ENCODE measurements at regions of chr10 and their contacts with region 1.

Region 1: DNA sequence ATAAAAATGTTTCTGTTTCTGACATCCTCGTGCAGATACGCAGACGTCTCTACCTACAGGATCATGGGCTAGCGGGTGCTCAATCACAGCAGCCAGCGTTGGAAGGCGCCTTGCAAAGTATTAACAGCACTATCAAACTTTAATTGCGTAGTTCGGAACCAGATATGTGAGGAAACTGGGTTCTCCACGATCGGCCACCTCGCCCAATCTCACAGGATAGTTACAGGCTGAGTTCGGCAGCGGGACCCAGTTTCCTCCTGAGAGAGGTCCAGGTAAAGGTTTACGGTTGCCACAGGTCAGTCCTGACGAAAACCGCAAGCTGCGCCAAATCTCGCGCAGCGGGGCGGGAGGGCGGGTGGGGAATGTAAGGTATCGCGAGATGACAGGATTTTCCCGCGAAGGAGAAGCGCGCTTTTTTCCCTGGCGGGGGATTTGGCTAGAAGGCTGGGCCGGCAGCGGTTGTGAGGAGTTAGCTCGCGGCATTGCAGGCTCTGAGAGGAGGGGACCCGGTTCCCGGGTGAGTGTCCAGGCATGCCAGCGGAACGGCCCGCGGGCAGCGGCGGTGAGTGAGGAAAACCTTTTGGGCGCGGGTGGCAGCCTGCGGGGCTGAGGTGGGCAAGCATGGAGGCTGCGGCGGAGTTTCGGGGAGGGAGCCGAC is at the start of gene HELLS:
- DNase-seq: peak; percentile 85
- H3K4me3 Mint-ChIP-seq: peak within 1 kb of the TSS; percentile 98
- H3K27ac Mint-ChIP-seq: peak within 1 kb of the TSS; percentile 89
- H3K4me1 Mint-ChIP-seq: peaks cover 13% of the 10 kb centered on the region
- H3K27me3 Mint-ChIP-seq: peaks cover 2% of the 10 kb centered on the region
- total RNA-seq, gene HELLS: 109 TPM

Region 2: DNA sequence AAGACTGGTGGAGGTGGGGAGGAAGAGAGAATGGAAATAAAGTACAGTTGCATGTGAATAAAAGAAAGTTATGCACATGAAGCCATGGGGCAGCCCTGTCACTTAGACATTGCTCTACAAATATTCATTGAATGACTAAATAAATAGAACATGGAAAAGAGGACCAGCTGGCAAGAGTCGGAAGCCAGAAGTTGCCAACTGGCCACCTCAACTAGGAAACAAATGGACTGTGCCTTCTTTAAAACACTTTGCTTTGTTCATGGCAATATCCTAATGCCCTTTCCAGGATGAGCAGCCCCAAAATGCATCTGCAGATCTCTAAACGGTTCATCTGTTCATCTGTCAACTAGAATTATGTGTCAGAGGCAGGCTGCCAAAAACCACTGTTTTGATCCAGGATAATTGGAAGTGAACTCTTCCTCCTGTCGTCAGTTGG is 340.1 kb before region 1 on chr10:
- CTCF ChIA-PET with region 1: no interaction called
- intact Hi-C with region 1: no loop called
- DNase-seq: no peak
- H3K4me3 Mint-ChIP-seq: no peak overlapping the region
- H3K27ac Mint-ChIP-seq: no peak overlapping the region
- H3K4me1 Mint-ChIP-seq: no peaks in the 10 kb centered on the region
- H3K27me3 Mint-ChIP-seq: peaks cover 7% of the 10 kb centered on the region

Region 3: GRCh38 chr10:94429049-94429707 is 116.3 kb before region 1 on chr10:
- CTCF ChIA-PET with region 1: no interaction called
- intact Hi-C with region 1: no loop called
- DNase-seq: no peak
- H3K4me3 Mint-ChIP-seq: no peak overlapping the region
- H3K27ac Mint-ChIP-seq: no peak overlapping the region
- H3K4me1 Mint-ChIP-seq: no peaks in the 10 kb centered on the region
- H3K27me3 Mint-ChIP-seq: peaks cover 27% of the 10 kb centered on the region

Region 4: DNA sequence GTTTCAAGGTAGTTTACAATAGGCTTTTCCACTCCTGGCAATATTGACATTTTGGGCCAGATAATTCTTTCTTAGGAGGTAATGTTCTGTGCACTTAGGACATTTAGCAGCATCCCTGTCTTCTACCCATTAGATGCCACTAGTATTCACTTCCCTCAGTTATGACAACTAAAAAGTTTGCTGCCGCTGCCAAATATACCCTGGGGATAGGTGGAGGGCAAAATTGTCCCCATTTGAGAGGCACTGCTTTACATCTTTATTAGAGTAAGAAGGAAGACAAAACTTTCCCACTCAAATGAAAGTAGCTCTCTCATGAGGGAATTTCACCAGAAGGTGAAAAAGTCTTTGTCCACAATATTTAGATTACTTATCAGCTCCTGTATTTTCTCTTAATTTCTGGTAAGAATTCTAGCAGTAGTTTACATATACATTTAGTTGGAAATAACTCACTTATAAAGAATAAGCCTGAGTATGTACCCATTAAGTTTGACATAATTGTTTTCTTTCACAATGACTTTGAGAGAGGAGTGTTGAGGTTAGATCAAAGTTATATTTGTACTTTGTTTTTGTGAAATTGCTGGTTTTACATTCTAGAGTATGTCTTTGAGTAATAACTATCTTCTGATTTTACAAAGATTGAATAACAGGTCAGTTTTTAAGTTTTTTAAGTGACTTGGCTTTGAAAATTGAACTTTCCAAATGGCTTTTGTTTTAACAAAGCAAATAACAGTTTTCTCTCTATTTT is 46.1 kb after region 1 on chr10:
- CTCF ChIA-PET with region 1: no interaction called
- intact Hi-C with region 1: loop called (anchors 2 kb)
- DNase-seq: no peak
- H3K4me3 Mint-ChIP-seq: no peak overlapping the region
- H3K27ac Mint-ChIP-seq: peak overlapping the region; percentile 50
- H3K4me1 Mint-ChIP-seq: peaks cover 9% of the 10 kb centered on the region
- H3K27me3 Mint-ChIP-seq: no peaks in the 10 kb centered on the region

Region 5: DNA sequence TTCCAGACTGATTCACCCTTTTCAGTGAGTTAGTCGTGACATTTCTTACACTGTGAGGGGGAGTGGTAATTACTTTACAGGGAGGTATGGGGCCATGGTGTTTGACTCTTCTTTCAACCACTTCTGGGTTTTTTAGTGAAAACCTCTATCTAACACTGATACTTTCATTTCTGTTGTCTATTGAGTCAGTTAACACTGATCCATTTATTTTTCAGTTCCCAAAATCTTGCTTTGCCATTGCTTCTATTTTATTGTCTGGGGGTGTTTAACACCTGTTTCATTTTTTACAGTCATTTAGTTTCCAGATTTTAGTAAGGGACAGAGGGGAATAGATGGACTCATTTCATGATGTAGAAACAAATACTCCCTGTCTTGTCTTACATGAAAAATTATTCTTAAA is 61.6 kb after region 1 on chr10:
- CTCF ChIA-PET with region 1: no interaction called
- intact Hi-C with region 1: loop called (anchors 1 kb)
- DNase-seq: peak; percentile 10
- H3K4me3 Mint-ChIP-seq: no peak overlapping the region
- H3K27ac Mint-ChIP-seq: peak overlapping the region; percentile 82
- H3K4me1 Mint-ChIP-seq: peaks cover 17% of the 10 kb centered on the region
- H3K27me3 Mint-ChIP-seq: no peaks in the 10 kb centered on the region

Region 6: DNA sequence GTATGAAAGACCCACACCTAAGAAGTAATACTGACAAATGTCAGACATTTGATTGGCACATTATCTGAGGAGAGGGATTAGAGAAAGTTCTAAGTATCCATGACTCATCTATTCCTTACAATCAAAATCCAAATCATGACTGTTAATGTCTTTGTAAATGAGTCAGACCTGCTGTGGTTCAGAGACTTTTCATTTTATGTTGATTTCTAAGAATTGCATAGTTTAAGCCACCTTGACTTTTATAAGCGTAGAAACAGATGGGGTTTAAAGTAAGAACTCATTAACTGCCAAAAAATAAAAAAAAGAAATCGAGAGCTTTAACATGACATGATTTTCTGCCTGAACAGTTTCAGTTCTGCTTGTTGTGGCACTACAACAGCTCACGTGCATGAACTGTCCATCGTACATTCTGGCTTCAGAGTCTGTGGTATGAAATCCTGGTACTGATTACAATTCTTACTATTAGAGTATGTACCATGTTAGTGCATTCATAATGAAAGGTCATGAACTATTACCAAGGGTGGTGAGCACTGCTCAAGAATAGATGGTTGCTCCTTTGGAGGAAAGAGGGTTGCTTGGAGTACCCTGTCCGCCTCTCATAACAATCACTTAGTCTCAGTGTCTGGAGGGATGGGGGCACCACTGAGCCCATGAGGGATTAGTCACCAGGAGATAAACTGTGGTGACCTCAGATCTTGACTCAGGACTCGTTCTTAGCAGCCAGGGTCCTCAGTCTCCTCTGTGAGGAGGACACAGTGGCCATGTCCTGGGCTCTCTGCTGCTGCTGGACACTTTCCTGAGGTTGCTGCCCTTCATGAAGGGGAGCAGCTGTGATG is 690.8 kb after region 1 on chr10:
- CTCF ChIA-PET with region 1: no interaction called
- intact Hi-C with region 1: loop called (anchors 5 kb)
- DNase-seq: peak; percentile 26
- H3K4me3 Mint-ChIP-seq: no peak overlapping the region
- H3K27ac Mint-ChIP-seq: peak overlapping the region; percentile 75
- H3K4me1 Mint-ChIP-seq: peaks cover 19% of the 10 kb centered on the region
- H3K27me3 Mint-ChIP-seq: peaks cover 20% of the 10 kb centered on the region